ENCODE measurements at regions of chr20 and their contacts with region 1.

Region 1: GRCh38 chr20:59598625-59599310 is 5.6 kb upstream of the PHACTR3 start:
- DNase-seq: peak; percentile 2
- H3K4me3 ChIP-seq: no peak overlapping the region
- H3K27ac ChIP-seq: no peak overlapping the region
- H3K4me1 ChIP-seq: no peaks in the 10 kb centered on the region
- H3K27me3 ChIP-seq: no peaks in the 10 kb centered on the region
- CTCF ChIP-seq: peak; percentile 68 to 75
- POLR2A ChIP-seq: no peak

Region 2: GRCh38 chr20:59751056-59751688 is 152.4 kb after region 1 on chr20:
- CTCF ChIA-PET with region 1: no interaction called
- POLR2A ChIA-PET with region 1: no interaction called
- dilution Hi-C with region 1: no loop called
- intact Hi-C with region 1: loop called (anchors 1 kb)
- DNase-seq: no peak
- H3K4me3 ChIP-seq: no peak overlapping the region
- H3K27ac ChIP-seq: no peak overlapping the region
- H3K4me1 ChIP-seq: no peaks in the 10 kb centered on the region
- H3K27me3 ChIP-seq: no peaks in the 10 kb centered on the region
- CTCF ChIP-seq: peak; percentile 36 to 47
- POLR2A ChIP-seq: no peak

Region 3: GRCh38 chr20:59835448-59836395 is 237.0 kb after region 1 on chr20:
- CTCF ChIA-PET with region 1: no interaction called
- POLR2A ChIA-PET with region 1: no interaction called
- dilution Hi-C with region 1: no loop called
- intact Hi-C with region 1: no loop called
- DNase-seq: no peak
- H3K4me3 ChIP-seq: no peak overlapping the region
- H3K27ac ChIP-seq: no peak overlapping the region
- H3K4me1 ChIP-seq: peaks cover 2% of the 10 kb centered on the region
- H3K27me3 ChIP-seq: no peaks in the 10 kb centered on the region
- CTCF ChIP-seq: no peak
- POLR2A ChIP-seq: no peak